B cell (primary cell): ENCODE measurements at regions of chr2 and their contacts with region 1.

Region 1: GRCh38 chr2:118061135-118061955 is 26.9 kb upstream of the INSIG2 start:
- DNase-seq: peak; percentile 72
- ATAC-seq: peak; percentile 84
- H3K4me3 ChIP-seq: no peak overlapping the region
- H3K4me3 Mint-ChIP-seq: peak overlapping the region; percentile 10
- H3K27ac ChIP-seq: no peak overlapping the region
- H3K27ac Mint-ChIP-seq: peak overlapping the region; percentile 60
- H3K4me1 ChIP-seq: peaks cover 33 to 45% of the 10 kb centered on the region in 2 donors
- H3K4me1 Mint-ChIP-seq: peaks cover 43% of the 10 kb centered on the region
- H3K27me3 ChIP-seq: peaks cover 0 to 5% (median 0%) of the 10 kb centered on the region in 4 experiments
- H3K27me3 Mint-ChIP-seq: peaks cover 13% of the 10 kb centered on the region
- CTCF ChIP-seq: peak; percentile 79

Region 2: GRCh38 chr2:118077636-118078247 is 16.4 kb after region 1 on chr2:
- CTCF ChIA-PET with region 1: interaction called, 24 read pairs
- POLR2A ChIA-PET with region 1: no interaction called
- intact Hi-C with region 1: no loop called
- DNase-seq: no peak
- ATAC-seq: no peak
- H3K4me3 ChIP-seq: no peak overlapping the region
- H3K4me3 Mint-ChIP-seq: no peak overlapping the region
- H3K27ac ChIP-seq: no peak overlapping the region
- H3K27ac Mint-ChIP-seq: no peak overlapping the region
- H3K4me1 ChIP-seq: no peaks in the 10 kb centered on the region
- H3K4me1 Mint-ChIP-seq: no peaks in the 10 kb centered on the region
- H3K27me3 ChIP-seq: peaks cover 0 to 10% (median 0%) of the 10 kb centered on the region in 4 experiments
- H3K27me3 Mint-ChIP-seq: peaks cover 72% of the 10 kb centered on the region
- CTCF ChIP-seq: no peak

Region 3: GRCh38 chr2:118386641-118387302 is 325.4 kb after region 1 on chr2:
- CTCF ChIA-PET with region 1: no interaction called
- POLR2A ChIA-PET with region 1: no interaction called
- intact Hi-C with region 1: no loop called
- DNase-seq: no peak
- ATAC-seq: no peak
- H3K4me3 ChIP-seq: no peak overlapping the region
- H3K4me3 Mint-ChIP-seq: no peak overlapping the region
- H3K27ac ChIP-seq: no peak overlapping the region
- H3K27ac Mint-ChIP-seq: no peak overlapping the region
- H3K4me1 ChIP-seq: no peaks in the 10 kb centered on the region
- H3K4me1 Mint-ChIP-seq: no peaks in the 10 kb centered on the region
- H3K27me3 ChIP-seq: peaks cover 0 to 3% (median 0%) of the 10 kb centered on the region in 4 experiments
- H3K27me3 Mint-ChIP-seq: peaks cover 4% of the 10 kb centered on the region
- CTCF ChIP-seq: no peak